Mucosa of descending colon (tissue), 3 donors: ENCODE measurements at regions of chr12 and their contacts with region 1.

Region 1: GRCh38 chr12:99043319-99043914 is 398.3 kb downstream of the APAF1 start:
- DNase-seq: peak in 2 of 3 donors; percentile 57 to 75
- ATAC-seq: peak; percentile 48
- H3K4me3 ChIP-seq: no peak overlapping the region
- H3K4me1 ChIP-seq: no peaks in the 10 kb centered on the region
- CTCF ChIP-seq: peak; percentile 65

Region 2: DNA sequence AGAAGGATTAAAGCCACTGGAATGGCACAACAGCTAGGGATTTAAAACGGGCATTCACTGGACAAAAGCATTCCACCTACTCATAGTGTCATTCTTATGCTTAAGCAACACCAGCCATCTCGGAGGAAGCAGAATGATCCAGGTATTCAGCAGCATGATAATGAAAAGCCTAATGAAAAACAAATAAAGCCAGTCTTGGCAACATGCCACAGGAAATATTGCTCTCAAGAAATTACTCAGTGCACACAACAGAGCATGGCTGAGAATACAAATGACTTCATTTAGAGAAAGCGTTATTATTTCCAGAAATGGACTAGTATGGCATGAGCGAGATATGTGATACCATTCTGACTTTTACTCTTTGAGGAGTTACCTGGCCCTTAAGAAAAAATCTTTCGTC is 43.9 kb after region 1 on chr12:
- intact Hi-C with region 1: no loop called
- DNase-seq: no peak
- ATAC-seq: no peak
- H3K4me3 ChIP-seq: no peak overlapping the region
- H3K4me1 ChIP-seq: no peaks in the 10 kb centered on the region
- CTCF ChIP-seq: no peak

Region 3: DNA sequence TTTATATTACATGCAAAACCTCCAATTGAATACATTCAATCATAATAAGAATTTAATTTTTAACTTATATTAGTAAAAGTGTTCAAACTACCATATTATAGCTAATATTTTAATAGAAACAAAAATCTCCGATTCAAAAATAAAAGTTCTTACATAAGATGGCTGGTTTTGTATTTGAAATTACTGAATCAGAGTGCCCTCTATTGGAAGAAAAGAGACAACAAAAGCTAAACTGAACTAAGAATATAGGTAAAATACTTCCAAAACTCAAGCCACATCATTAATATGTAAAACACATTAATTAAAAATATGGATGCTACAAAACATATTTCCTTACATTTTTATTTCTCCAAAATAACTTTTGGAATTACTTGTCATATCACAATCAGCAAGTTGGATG is 724.4 kb after region 1 on chr12:
- intact Hi-C with region 1: loop called in 1 of 2 experiments (anchors 10 kb)
- DNase-seq: no peak
- ATAC-seq: no peak
- H3K4me3 ChIP-seq: no peak overlapping the region
- H3K4me1 ChIP-seq: no peaks in the 10 kb centered on the region
- CTCF ChIP-seq: no peak